Heart right ventricle (tissue), 16 donors: ENCODE measurements at regions of chr7 and their contacts with region 1.

Region 1: DNA sequence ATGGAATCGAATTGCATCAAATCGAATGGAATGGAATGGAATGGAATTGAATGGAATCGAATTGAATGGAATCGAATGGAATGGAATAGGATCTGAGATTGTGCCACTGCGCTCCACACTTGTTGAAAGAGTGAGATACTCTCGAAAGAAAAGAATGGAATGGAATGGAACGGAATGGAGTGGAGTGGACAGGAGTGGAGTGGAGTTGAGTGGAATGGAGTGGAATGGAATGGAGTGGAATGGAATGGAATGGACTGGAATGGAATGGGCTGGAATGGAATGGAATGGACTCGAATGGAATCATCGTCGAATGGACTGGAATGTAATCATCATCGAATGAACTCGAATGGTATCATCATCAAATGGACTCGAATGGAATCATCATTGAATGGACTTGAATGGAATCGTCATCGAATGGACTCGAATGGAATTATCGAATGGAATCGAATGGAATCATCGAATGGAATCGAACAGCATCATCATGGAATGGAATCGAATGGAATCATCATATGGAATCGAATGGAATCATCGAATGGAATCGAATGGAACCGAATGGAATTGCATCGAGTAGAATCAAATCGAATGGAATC is 38.1 kb downstream of the ZNF716 start:
- DNase-seq: no peak
- ATAC-seq: no peak
- H3K4me3 ChIP-seq: no peak overlapping the region
- H3K27ac ChIP-seq: no peak overlapping the region
- H3K4me1 ChIP-seq: no peaks in the 10 kb centered on the region
- H3K27me3 ChIP-seq: no peaks in the 10 kb centered on the region
- CTCF ChIP-seq: no peak

Region 2: DNA sequence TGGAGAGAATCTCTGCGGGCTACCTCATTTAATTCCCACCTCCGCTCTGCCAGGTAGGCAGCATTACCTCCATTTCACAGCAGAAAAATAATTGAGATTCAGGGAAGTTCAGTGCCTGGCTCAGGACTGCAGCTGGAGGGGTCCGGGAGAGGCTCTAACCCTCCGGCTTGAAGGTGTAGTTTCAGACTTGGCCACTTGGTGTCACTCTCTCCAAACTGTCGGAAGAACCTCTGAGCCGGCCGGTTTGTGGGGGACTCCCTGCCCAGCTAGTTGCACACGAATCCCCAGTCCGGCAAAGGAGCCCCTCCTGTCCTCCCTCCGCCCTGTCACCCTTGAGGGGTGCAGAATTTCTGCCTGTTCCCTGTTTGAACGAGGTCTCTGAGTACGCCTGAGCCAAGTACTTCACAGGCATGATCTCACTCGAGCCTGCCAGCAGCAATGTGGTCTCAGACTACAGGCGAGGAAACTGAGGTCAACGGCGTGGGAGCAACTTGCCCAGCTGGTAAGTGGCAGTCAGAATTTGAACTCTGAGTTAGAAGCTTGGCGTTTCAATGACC is 182.8 kb before region 1 on chr7:
- intact Hi-C with region 1: loop called in 5 of 10 experiments (anchors 5 to 10 kb)
- DNase-seq: no peak
- ATAC-seq: peak in 5 of 8 donors; percentile 20 to 75 (median 62)
- H3K4me3 ChIP-seq: no peak overlapping the region
- H3K27ac ChIP-seq: no peak overlapping the region
- H3K4me1 ChIP-seq: no peaks in the 10 kb centered on the region
- H3K27me3 ChIP-seq: no peaks in the 10 kb centered on the region
- CTCF ChIP-seq: peak; percentile 23 to 71 (median 52)

Region 3: DNA sequence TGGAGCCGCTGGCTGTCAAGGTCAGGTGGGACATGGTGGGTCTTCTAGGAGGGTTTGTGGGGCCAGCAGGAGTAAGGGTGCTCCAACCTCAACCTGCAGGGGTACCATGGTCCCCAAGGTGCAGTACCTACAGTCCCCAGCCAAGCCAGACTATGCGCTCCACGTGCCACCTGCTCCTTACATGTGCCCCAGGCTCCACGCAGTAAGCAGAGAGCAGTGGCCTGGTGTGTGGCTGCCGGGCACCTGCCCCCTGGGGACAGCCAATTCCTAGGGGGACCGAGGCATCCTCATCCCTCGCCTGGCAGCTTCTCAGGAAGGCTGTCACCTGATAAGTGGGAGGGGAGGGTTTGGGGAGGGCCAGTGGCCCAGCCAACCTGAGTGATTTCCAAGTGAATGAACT is 49.8 kb before region 1 on chr7:
- intact Hi-C with region 1: no loop called
- DNase-seq: no peak
- ATAC-seq: no peak
- H3K4me3 ChIP-seq: no peak overlapping the region
- H3K27ac ChIP-seq: no peak overlapping the region
- H3K4me1 ChIP-seq: no peaks in the 10 kb centered on the region
- H3K27me3 ChIP-seq: no peaks in the 10 kb centered on the region
- CTCF ChIP-seq: no peak